Endothelial cell of umbilical vein (primary cell): ENCODE measurements at regions of chr7 and their contacts with region 1.

Region 1: DNA sequence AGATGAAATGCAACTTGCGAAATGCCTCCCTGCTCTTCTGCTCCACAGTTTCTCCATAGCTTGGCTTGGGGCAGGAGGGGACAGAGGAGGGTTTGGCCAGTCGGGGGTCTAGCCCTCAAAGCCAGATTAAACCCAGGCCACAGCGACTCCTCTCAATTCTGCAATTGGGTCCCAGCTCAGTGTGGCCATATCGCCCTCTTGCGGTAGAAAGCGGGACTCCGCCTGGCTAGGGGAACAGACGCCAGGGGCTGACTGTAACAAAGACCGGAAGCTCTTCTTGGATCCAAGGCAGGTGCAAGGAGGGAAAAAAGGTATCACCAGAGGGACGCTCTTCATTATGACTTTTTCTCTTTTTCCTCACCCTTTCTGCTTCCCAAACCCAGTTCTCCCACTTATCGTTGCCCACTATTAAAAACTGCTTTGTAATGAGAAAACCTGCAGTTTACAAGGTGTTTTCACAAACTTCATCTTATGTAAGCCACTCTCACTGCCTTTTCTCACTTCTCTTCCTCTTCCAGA is 36.6 kb upstream of the TNPO3 start:
- DNase-seq: peak; percentile 80
- H3K4me3 ChIP-seq: no peak overlapping the region
- H3K27ac ChIP-seq: no peak overlapping the region
- H3K4me1 ChIP-seq: no peaks in the 10 kb centered on the region
- H3K27me3 ChIP-seq: peaks cover 6 to 8% of the 10 kb centered on the region in 2 experiments
- CTCF ChIP-seq: peak; percentile 97 to 98
- POLR2A ChIP-seq: no peak

Region 2: GRCh38 chr7:128899392-128899791 is 192.2 kb before region 1 on chr7:
- CTCF ChIA-PET with region 1: interaction called, 47 read pairs
- POLR2A ChIA-PET with region 1: no interaction called
- dilution Hi-C with region 1: no loop called
- intact Hi-C with region 1: loop called (anchors 1 kb)
- DNase-seq: no peak
- H3K4me3 ChIP-seq: no peak overlapping the region
- H3K27ac ChIP-seq: no peak overlapping the region
- H3K4me1 ChIP-seq: no peaks in the 10 kb centered on the region
- H3K27me3 ChIP-seq: peaks cover 2 to 11% of the 10 kb centered on the region in 2 experiments
- CTCF ChIP-seq: no peak
- POLR2A ChIP-seq: no peak

Region 3: GRCh38 chr7:128909625-128910257 is 181.8 kb before region 1 on chr7:
- CTCF ChIA-PET with region 1: interaction called, 25 read pairs
- POLR2A ChIA-PET with region 1: no interaction called
- dilution Hi-C with region 1: no loop called
- intact Hi-C with region 1: loop called (anchors 1 kb)
- DNase-seq: peak; percentile 17
- H3K4me3 ChIP-seq: no peak overlapping the region
- H3K27ac ChIP-seq: no peak overlapping the region
- H3K4me1 ChIP-seq: peaks cover 5% of the 10 kb centered on the region
- H3K27me3 ChIP-seq: peaks cover 41% of the 10 kb centered on the region in 2 experiments
- CTCF ChIP-seq: no peak
- POLR2A ChIP-seq: no peak

Region 4: GRCh38 chr7:129054438-129055293 is 36.9 kb before region 1 on chr7 and contains the start of gene TNPO3:
- CTCF ChIA-PET with region 1: interaction called, 12 read pairs
- POLR2A ChIA-PET with region 1: no interaction called
- dilution Hi-C with region 1: no loop called
- intact Hi-C with region 1: no loop called
- DNase-seq: peak; percentile 86
- H3K4me3 ChIP-seq: peak within 1 kb of the TSS; percentile 68 to 93 (median 93)
- H3K27ac ChIP-seq: peak within 1 kb of the TSS; percentile 80
- H3K4me1 ChIP-seq: peaks cover 15% of the 10 kb centered on the region
- H3K27me3 ChIP-seq: peaks cover 5 to 8% of the 10 kb centered on the region in 2 experiments
- CTCF ChIP-seq: peak in 1 of 2 donors; percentile 7
- POLR2A ChIP-seq: peak; percentile 86
- total RNA-seq, gene TNPO3: 46.9 TPM in 2 replicates